H1 (cell line): ENCODE measurements at regions of chr9 and their contacts with region 1.

Region 1: DNA sequence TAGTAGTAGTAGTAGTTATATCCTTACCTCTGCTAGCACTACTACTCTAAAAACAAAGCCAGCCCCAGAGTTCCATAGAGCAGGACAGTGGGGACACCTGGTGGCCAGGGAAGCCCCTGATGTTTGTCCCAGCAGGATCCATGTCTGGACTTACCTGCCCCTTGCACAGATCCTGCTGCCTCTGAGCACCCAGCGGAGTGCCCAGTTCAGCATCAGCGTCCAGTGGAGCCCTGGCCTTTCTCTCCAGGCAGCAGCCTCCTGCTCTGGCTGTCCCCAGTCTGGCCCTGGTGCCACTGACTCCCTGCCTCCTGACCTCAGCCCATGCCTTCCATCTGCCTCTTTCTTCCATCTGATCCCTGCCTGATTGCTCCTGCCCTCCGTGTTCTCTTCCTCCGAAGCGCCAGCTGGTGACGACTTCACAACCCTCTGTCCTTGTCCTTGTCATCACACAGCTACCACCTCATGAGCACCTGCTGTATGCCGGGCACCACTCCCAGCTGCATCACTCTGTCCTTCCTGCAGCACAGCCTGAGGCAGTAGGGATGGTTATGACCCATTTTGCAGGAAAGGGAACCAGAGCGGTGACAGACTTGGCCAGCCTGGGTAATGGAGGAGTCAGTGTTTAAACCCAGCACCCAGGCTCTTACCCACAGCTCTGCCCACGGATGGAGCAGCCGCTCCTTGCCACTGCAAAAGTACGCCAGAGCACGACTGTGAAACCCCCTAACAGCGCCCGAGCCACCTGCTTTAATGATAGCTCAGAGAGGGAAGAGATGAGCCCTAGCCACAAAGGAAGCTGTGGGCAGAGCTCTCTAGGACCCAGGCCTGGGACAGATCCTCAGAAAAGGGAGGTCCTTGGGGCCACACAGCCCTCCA is 11.5 kb downstream of the SARDH start:
- DNase-seq: no peak
- H3K4me3 ChIP-seq: no peak overlapping the region
- H3K27ac ChIP-seq: no peak overlapping the region
- H3K4me1 ChIP-seq: no peaks in the 10 kb centered on the region
- H3K27me3 ChIP-seq: no peaks in the 10 kb centered on the region
- CTCF ChIP-seq: peak in 2 of 3 experiments; percentile 76 to 78; a peak in 3 of 4 replicates
- EP300 ChIP-seq: no peak
- POLR2A ChIP-seq: no peak
- RAD21 ChIP-seq: peak; percentile 85 to 87

Region 2: GRCh38 chr9:133532937-133533668 is 193.5 kb before region 1 on chr9:
- CTCF ChIA-PET with region 1: interaction called, 18 read pairs
- POLR2A ChIA-PET with region 1: interaction called, 3 read pairs
- DNase-seq: peak; percentile 44 to 93
- H3K4me3 ChIP-seq: no peak overlapping the region
- H3K27ac ChIP-seq: no peak overlapping the region
- H3K4me1 ChIP-seq: peaks cover 0 to 38% (median 21%) of the 10 kb centered on the region in 4 experiments; a peak in 6 of 7 replicates
- H3K27me3 ChIP-seq: peaks cover 0 to 31% (median 18%) of the 10 kb centered on the region in 4 experiments; a peak in 6 of 7 replicates
- CTCF ChIP-seq: peak in 2 of 3 experiments; percentile 82 to 89; a peak in 3 of 4 replicates
- EP300 ChIP-seq: no peak
- POLR2A ChIP-seq: no peak
- RAD21 ChIP-seq: peak; percentile 82 to 86

Region 3: GRCh38 chr9:133604214-133604613 is 122.4 kb before region 1 on chr9:
- CTCF ChIA-PET with region 1: interaction called, 14 read pairs
- POLR2A ChIA-PET with region 1: no interaction called
- DNase-seq: no peak
- H3K4me3 ChIP-seq: no peak overlapping the region
- H3K27ac ChIP-seq: no peak overlapping the region
- H3K4me1 ChIP-seq: peaks cover 0 to 7% (median 3%) of the 10 kb centered on the region in 4 experiments; a peak in 5 of 7 replicates
- H3K27me3 ChIP-seq: peaks cover 5 to 15% (median 14%) of the 10 kb centered on the region in 4 experiments
- CTCF ChIP-seq: peak in 2 of 3 experiments; percentile 9 to 27; a peak in 1 of 4 replicates
- EP300 ChIP-seq: no peak
- POLR2A ChIP-seq: no peak
- RAD21 ChIP-seq: peak; percentile 49 to 52

Region 4: DNA sequence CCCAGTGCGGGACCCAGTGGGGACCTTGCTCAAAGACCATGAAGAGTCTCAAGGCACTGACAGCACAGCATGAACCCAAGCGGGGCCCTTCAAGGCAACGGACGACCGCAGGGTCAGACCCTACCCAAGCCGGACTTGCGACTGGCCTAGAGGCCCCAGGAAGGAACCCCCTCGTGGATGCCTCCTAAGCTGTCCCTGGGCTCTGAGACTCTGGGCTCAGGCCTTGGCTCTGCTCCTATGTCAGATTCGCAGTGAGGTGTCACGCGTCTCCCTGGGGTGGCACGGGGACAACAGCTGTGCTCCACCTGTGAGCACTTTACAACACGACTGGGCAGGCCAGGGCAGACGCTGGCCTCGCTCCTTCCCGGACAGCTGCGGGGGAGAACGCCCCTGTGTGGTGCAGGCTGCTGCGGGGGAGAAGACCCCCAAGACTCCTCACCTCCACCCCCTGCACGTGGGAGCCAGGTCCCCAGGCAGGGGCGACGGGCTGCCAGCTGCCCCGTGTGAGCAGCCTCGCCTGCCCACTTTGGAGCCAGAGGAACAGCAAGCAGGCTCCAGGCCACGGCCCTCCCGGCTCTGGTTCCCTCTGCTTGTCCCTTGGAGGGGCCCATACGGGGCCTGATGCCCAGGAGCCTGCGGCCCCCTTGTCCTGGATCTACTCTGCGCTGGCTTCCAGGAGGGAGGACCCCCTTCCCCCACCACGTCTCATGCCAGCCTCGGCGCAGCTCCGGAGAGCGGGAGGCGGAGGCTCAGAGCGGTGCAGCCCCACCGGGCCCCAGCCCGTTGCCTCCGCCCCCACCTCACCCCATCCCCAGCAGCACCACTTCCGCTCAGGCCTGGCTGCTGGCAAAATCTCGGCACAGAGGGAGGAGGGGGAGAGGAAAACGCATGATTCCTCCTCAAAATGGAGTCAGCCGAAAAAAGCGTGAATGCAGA is 24.5 kb before region 1 on chr9:
- CTCF ChIA-PET with region 1: interaction called, 17 read pairs
- POLR2A ChIA-PET with region 1: no interaction called
- DNase-seq: no peak
- H3K4me3 ChIP-seq: no peak overlapping the region
- H3K27ac ChIP-seq: no peak overlapping the region
- H3K4me1 ChIP-seq: peaks cover 0 to 13% (median 10%) of the 10 kb centered on the region in 4 experiments; a peak in 5 of 7 replicates
- H3K27me3 ChIP-seq: no peaks in the 10 kb centered on the region; a peak in 2 of 7 replicates
- CTCF ChIP-seq: no peak
- EP300 ChIP-seq: no peak
- POLR2A ChIP-seq: no peak
- RAD21 ChIP-seq: no peak

Region 5: DNA sequence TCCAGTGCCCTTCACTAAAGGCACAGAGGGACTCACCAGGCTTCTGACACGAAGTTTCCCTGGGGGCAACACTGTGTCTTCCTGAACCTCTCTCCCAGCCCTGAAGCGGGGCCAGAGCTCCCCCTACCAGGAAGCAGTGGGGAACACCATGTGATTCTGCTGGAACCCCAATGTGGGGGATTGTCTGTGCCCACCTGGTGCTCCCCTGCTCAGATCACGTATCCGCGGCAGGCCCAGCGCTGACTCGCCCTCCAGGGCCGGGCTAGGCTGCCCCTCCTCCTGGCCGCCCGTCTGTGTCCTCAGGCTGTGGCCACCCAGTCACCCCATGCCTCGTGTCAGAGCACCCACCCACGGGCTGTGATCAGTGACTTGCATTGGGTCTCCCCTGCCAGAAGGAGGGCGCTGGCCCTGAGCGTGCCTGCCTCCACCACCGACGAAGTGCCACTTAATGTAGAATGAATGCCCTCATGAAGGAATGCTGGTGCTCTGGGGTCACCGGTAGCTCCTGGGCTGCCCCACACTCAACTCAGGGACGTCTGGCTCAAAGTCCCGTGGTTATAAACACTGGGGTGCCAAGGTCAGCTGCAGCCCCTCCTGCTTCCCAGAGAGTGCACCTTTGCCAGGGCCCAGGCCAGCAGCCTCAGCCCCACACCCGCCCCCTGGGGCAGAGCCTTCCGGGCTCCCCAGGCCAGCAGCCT is 10.6 kb before region 1 on chr9:
- CTCF ChIA-PET with region 1: interaction called, 39 read pairs
- POLR2A ChIA-PET with region 1: no interaction called
- DNase-seq: peak in 1 of 2 experiments; percentile 80
- H3K4me3 ChIP-seq: no peak overlapping the region
- H3K27ac ChIP-seq: no peak overlapping the region
- H3K4me1 ChIP-seq: peaks cover 0 to 9% (median 3%) of the 10 kb centered on the region in 4 experiments; a peak in 3 of 7 replicates
- H3K27me3 ChIP-seq: no peaks in the 10 kb centered on the region
- CTCF ChIP-seq: peak in 2 of 3 experiments; percentile 73 to 86; a peak in 2 of 4 replicates
- EP300 ChIP-seq: no peak
- POLR2A ChIP-seq: no peak
- RAD21 ChIP-seq: peak; percentile 84 to 87

Region 6: GRCh38 chr9:133759146-133759900 is 32.7 kb after region 1 on chr9:
- CTCF ChIA-PET with region 1: no interaction called
- POLR2A ChIA-PET with region 1: no interaction called
- DNase-seq: peak in 1 of 2 experiments; percentile 63
- H3K4me3 ChIP-seq: no peak overlapping the region
- H3K27ac ChIP-seq: no peak overlapping the region
- H3K4me1 ChIP-seq: no peaks in the 10 kb centered on the region; a peak in 1 of 7 replicates
- H3K27me3 ChIP-seq: no peaks in the 10 kb centered on the region; a peak in 1 of 7 replicates
- CTCF ChIP-seq: no peak
- EP300 ChIP-seq: no peak
- POLR2A ChIP-seq: no peak
- RAD21 ChIP-seq: no peak